ENCODE measurements at regions of chr3 and their contacts with region 1.

Region 1: DNA sequence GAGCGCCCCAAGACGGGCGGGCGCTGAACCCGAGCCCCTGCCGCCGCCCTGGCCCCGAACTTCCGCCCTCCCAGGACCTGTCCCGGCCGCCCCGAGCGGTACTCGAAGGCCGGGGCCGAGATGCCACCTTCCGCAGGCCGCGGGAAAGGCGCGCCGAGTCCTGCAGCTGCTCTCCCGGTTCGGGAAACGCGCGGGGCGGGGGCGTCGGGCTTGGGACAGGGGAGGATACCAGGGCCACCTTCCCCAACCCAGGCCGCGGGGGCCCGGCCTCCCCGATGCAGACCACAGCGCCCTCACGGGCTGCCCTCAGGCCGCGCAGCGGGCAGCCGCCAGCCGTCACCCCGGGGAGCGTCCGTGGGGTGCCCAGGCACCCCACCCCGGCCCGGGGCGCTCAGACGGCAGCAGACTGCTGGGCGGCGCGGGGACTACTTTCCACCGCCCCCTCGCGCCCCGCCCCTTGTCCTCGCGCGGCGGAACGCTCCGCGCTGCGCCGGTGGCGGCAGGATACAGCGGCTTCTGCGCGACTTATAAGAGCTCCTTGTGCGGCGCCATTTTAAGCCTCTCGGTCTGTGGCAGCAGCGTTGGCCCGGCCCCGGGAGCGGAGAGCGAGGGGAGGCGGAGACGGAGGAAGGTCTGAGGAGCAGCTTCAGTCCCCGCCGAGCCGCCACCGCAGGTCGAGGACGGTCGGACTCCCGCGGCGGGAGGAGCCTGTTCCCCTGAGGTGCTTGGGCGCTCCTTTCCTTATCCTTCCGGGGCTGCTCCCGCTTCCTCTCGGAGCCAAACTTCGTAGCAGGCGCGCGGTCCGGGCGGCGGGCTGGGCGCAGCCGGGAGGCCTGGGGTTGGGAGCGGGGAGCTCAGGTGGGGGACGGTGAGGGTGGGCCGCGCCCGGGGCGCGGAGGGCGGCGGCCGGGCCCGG is at the start of gene CTNNB1:
- DNase-seq: peak; percentile 70 to 93
- H3K4me3 ChIP-seq: peak within 1 kb of the TSS; percentile 83 to 99 (median 86)
- H3K27ac ChIP-seq: peak within 1 kb of the TSS; percentile 97
- H3K4me1 ChIP-seq: peaks cover 0 to 15% (median 1%) of the 10 kb centered on the region in 4 experiments; a peak in 2 of 7 replicates
- H3K27me3 ChIP-seq: no peaks in the 10 kb centered on the region
- CTCF ChIP-seq: no peak
- EP300 ChIP-seq: peak; percentile 33 to 74; a peak in 2 of 3 replicates
- POLR2A ChIP-seq: peak; percentile 97 to 99
- RAD21 ChIP-seq: peak; percentile 13 to 30; a peak in 3 of 4 replicates
- total RNA-seq, gene CTNNB1: 325 and 356 TPM in 2 replicates

Region 2: GRCh38 chr3:40827942-40828688 is 371.1 kb before region 1 on chr3:
- CTCF ChIA-PET with region 1: no interaction called
- POLR2A ChIA-PET with region 1: no interaction called
- DNase-seq: no peak
- H3K4me3 ChIP-seq: no peak overlapping the region
- H3K27ac ChIP-seq: no peak overlapping the region
- H3K4me1 ChIP-seq: no peaks in the 10 kb centered on the region
- H3K27me3 ChIP-seq: no peaks in the 10 kb centered on the region
- CTCF ChIP-seq: no peak
- EP300 ChIP-seq: no peak
- POLR2A ChIP-seq: no peak
- RAD21 ChIP-seq: no peak

Region 3: GRCh38 chr3:40940651-40941050 is 258.6 kb before region 1 on chr3:
- CTCF ChIA-PET with region 1: no interaction called
- POLR2A ChIA-PET with region 1: no interaction called
- DNase-seq: no peak
- H3K4me3 ChIP-seq: no peak overlapping the region
- H3K27ac ChIP-seq: no peak overlapping the region
- H3K4me1 ChIP-seq: no peaks in the 10 kb centered on the region
- H3K27me3 ChIP-seq: no peaks in the 10 kb centered on the region
- CTCF ChIP-seq: no peak
- EP300 ChIP-seq: no peak
- POLR2A ChIP-seq: no peak
- RAD21 ChIP-seq: no peak

Region 4: GRCh38 chr3:41141433-41142168 is 57.6 kb before region 1 on chr3:
- CTCF ChIA-PET with region 1: no interaction called
- POLR2A ChIA-PET with region 1: interaction called, 11 read pairs
- DNase-seq: no peak
- H3K4me3 ChIP-seq: no peak overlapping the region
- H3K27ac ChIP-seq: no peak overlapping the region
- H3K4me1 ChIP-seq: no peaks in the 10 kb centered on the region
- H3K27me3 ChIP-seq: no peaks in the 10 kb centered on the region
- CTCF ChIP-seq: no peak
- EP300 ChIP-seq: no peak
- POLR2A ChIP-seq: no peak
- RAD21 ChIP-seq: no peak

Region 5: DNA sequence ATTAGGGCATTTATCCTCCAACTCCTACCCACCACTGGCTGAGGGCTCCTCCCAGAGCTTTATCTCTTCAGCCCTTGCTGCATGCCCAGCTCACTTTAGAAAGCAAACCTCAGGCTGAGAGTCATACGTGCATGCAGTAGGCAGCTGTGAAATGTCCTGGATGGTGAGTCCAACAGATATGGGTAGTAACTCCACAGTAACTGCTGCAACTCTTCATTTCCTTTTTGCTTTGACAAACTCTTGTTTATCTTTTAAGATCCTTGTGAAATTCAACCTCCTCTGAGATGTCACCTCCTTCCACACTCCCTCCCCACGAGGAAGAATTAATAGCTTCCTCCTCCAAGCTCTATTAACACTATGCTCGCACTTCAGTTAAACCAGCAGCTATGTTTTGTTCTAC is 35.8 kb before region 1 on chr3:
- CTCF ChIA-PET with region 1: interaction called, 4 read pairs
- POLR2A ChIA-PET with region 1: interaction called, 11 read pairs
- DNase-seq: no peak
- H3K4me3 ChIP-seq: no peak overlapping the region
- H3K27ac ChIP-seq: no peak overlapping the region
- H3K4me1 ChIP-seq: peaks cover 0 to 4% (median 3%) of the 10 kb centered on the region in 4 experiments; a peak in 3 of 7 replicates
- H3K27me3 ChIP-seq: no peaks in the 10 kb centered on the region
- CTCF ChIP-seq: no peak
- EP300 ChIP-seq: no peak
- POLR2A ChIP-seq: no peak
- RAD21 ChIP-seq: no peak

Region 6: GRCh38 chr3:41175365-41175764 is 23.8 kb before region 1 on chr3:
- CTCF ChIA-PET with region 1: no interaction called
- POLR2A ChIA-PET with region 1: interaction called, 28 read pairs
- DNase-seq: no peak
- H3K4me3 ChIP-seq: no peak overlapping the region
- H3K27ac ChIP-seq: no peak overlapping the region
- H3K4me1 ChIP-seq: peaks cover 0 to 7% (median 0%) of the 10 kb centered on the region in 4 experiments; a peak in 2 of 7 replicates
- H3K27me3 ChIP-seq: no peaks in the 10 kb centered on the region
- CTCF ChIP-seq: no peak
- EP300 ChIP-seq: no peak
- POLR2A ChIP-seq: no peak
- RAD21 ChIP-seq: no peak

Region 7: DNA sequence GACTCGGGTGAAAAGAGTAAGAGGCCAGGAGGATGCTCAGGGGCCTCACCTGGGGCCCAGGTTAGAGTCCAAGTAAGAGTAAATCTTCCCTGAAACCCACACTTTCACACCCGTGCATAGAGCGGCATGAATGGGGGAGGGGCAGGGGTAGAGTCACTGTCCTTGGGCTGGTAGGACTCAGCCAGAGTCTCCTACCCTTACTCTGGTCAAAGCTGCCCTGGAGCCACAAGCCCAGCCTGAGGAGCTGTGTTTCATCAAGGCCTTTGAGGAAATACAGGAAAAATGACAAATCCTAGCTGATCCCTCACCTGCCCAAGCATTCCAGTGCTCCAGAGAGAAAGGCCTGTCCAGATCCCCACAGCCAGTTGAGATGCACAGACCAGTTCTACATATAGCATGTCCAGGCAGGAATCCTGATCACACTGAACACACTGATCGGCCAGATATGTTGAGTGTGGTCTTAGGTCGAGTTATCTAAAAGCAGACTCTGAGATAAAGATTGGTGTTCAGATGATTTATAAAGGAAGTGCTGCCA is 16.6 kb before region 1 on chr3:
- CTCF ChIA-PET with region 1: no interaction called
- POLR2A ChIA-PET with region 1: interaction called, 28 read pairs
- DNase-seq: no peak
- H3K4me3 ChIP-seq: no peak overlapping the region
- H3K27ac ChIP-seq: no peak overlapping the region
- H3K4me1 ChIP-seq: no peaks in the 10 kb centered on the region; a peak in 1 of 7 replicates
- H3K27me3 ChIP-seq: no peaks in the 10 kb centered on the region
- CTCF ChIP-seq: no peak
- EP300 ChIP-seq: no peak
- POLR2A ChIP-seq: no peak
- RAD21 ChIP-seq: no peak

Region 8: GRCh38 chr3:41216993-41217392 is 17.8 kb after region 1 on chr3:
- CTCF ChIA-PET with region 1: interaction called, 3 read pairs
- POLR2A ChIA-PET with region 1: interaction called, 80 read pairs
- DNase-seq: no peak
- H3K4me3 ChIP-seq: no peak overlapping the region
- H3K27ac ChIP-seq: no peak overlapping the region
- H3K4me1 ChIP-seq: peaks cover 3 to 15% (median 10%) of the 10 kb centered on the region in 4 experiments; a peak in 5 of 7 replicates
- H3K27me3 ChIP-seq: peaks cover 0 to 1% (median 0%) of the 10 kb centered on the region in 4 experiments; a peak in 1 of 7 replicates
- CTCF ChIP-seq: no peak
- EP300 ChIP-seq: no peak
- POLR2A ChIP-seq: no peak
- RAD21 ChIP-seq: no peak

Region 9: DNA sequence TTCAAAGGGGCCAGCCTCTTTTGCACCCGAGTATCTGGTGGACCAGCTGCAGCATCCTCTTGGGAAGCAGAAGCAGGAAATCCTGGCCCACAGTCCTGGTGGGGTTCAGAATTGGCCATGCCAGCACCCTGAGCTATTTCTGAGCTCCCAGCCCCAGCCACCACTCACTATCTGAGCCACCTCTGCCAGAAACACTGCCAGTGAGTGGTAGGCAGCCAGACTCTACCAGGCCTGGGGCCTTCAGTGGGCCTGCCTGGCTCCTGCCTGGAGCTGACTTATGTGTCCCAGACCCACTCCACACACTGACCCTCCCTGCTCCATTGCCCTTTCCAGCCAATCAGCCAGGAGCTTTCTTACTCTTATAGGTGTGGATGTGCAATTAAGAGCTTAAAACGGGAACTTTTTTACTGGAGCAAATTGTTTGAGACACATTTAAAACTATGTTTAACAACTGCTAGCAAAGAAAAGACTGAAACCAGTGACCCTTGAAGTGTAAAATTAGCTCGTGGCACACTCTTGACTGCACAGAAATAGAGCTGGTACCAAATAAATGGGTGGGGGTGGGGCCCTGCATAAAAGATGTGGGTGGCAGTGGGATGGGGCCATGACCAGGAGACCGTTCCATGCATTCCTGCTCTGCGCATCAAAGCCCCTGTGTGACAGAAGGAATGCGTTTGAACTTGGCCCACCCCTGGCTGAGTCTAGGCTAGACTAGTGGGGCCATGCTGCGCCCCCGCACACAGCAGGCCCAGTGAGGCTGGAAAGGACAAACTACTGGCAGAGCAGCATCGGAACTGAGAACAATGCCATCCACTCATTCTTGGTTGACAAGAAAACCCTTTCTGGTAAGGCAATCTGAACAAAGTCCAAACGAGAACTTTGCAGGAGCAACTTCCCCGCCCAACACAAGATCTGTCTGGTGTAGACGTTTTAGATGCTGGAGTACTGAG is 48.1 kb after region 1 on chr3:
- CTCF ChIA-PET with region 1: no interaction called
- POLR2A ChIA-PET with region 1: interaction called, 11 read pairs
- DNase-seq: no peak
- H3K4me3 ChIP-seq: no peak overlapping the region
- H3K27ac ChIP-seq: no peak overlapping the region
- H3K4me1 ChIP-seq: peaks cover 0 to 3% (median 0%) of the 10 kb centered on the region in 4 experiments; a peak in 2 of 7 replicates
- H3K27me3 ChIP-seq: no peaks in the 10 kb centered on the region
- CTCF ChIP-seq: no peak
- EP300 ChIP-seq: no peak
- POLR2A ChIP-seq: no peak
- RAD21 ChIP-seq: no peak

Region 10: GRCh38 chr3:41369838-41370237 is 170.6 kb after region 1 on chr3:
- CTCF ChIA-PET with region 1: no interaction called
- POLR2A ChIA-PET with region 1: no interaction called
- DNase-seq: no peak
- H3K4me3 ChIP-seq: no peak overlapping the region
- H3K27ac ChIP-seq: no peak overlapping the region
- H3K4me1 ChIP-seq: peaks cover 4 to 24% (median 16%) of the 10 kb centered on the region in 4 experiments
- H3K27me3 ChIP-seq: no peaks in the 10 kb centered on the region
- CTCF ChIP-seq: no peak
- EP300 ChIP-seq: no peak
- POLR2A ChIP-seq: no peak
- RAD21 ChIP-seq: no peak

Measured in H1 (cell line).